H1 (cell line): ENCODE measurements at regions of chr19 and their contacts with region 1.

Region 1: DNA sequence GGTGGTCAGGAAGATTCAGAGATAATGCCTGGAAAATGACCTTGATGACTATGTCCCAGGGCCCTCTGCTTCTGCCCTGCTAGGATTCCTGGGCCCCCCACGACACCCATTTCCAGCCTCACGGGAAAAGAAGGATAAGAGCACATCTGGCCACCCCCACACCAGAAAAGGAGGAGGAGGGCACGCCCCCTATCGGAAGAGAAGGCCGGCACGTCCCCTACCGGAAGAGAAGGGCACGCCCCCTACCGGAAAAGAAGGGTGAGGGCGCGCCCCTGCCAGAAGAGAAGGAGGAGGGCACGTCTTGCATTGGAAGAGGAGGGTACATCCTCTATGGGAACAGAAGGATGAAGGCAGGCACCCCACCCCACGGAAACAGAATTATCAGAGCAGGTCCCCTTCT is 84.3 kb downstream of the IER2 start:
- DNase-seq: peak; percentile 31 to 85
- H3K4me3 ChIP-seq: no peak overlapping the region
- H3K27ac ChIP-seq: no peak overlapping the region
- H3K4me1 ChIP-seq: peaks cover 0 to 7% (median 3%) of the 10 kb centered on the region in 4 experiments; a peak in 4 of 7 replicates
- H3K27me3 ChIP-seq: no peaks in the 10 kb centered on the region
- CTCF ChIP-seq: peak; percentile 91 to 99 (median 96)
- EP300 ChIP-seq: no peak
- POLR2A ChIP-seq: no peak
- RAD21 ChIP-seq: peak; percentile 57

Region 2: GRCh38 chr19:13212759-13213330 is 21.7 kb before region 1 on chr19:
- CTCF ChIA-PET with region 1: interaction called, 16 read pairs
- POLR2A ChIA-PET with region 1: no interaction called
- DNase-seq: peak in 1 of 2 experiments; percentile 86
- H3K4me3 ChIP-seq: no peak overlapping the region
- H3K27ac ChIP-seq: no peak overlapping the region
- H3K4me1 ChIP-seq: peaks cover 0 to 10% (median 3%) of the 10 kb centered on the region in 4 experiments; a peak in 3 of 7 replicates
- H3K27me3 ChIP-seq: no peaks in the 10 kb centered on the region
- CTCF ChIP-seq: peak; percentile 69 to 88 (median 80)
- EP300 ChIP-seq: no peak
- POLR2A ChIP-seq: no peak
- RAD21 ChIP-seq: peak; percentile 50 to 61